ENCODE measurements at regions of chr22 and their contacts with region 1.

Region 1: GRCh38 chr22:23178512-23179254 is 1.6 kb upstream of the BCR start:
- DNase-seq: peak; percentile 90

Region 2: GRCh38 chr22:23219822-23220484 is 41.3 kb after region 1 on chr22:
- intact Hi-C with region 1: loop called in 1 of 2 experiments (anchors 5 kb)
- DNase-seq: no peak

Region 3: DNA sequence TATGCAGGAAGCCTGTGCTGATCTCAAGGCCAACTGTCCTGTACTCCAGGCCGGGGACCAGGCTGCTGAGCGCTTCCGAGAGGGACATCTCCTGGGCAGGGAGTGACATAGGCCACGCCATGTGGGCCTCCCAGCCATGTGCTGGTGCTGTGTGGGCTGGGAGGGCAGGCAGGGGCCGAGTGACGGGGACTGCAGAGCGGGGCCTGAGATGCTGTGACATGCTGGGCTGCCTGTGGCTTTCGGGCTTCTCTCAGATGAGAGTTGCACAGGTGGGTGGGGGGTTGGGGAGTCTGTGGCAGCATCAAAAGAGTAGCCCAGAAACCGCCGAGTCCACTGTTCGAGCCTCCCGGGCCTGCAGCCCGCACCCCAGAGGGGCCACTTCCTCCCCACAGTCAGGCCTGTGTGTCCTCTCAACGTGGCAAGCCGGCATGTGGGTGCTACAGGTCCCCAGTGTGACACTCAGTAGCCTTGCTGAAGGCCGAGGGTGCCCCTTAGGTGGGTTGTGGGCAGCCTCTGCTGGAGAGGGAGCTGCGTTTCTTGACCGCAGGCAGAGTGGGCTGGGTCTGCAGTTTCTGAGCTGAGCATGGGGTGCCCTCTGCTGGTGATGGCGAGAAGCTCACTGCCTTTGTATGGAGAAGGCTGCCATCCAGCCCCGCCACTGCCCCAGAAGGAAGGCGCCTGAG is 102.9 kb after region 1 on chr22:
- intact Hi-C with region 1: loop called (anchors 2 kb)
- DNase-seq: peak; percentile 95

Region 4: DNA sequence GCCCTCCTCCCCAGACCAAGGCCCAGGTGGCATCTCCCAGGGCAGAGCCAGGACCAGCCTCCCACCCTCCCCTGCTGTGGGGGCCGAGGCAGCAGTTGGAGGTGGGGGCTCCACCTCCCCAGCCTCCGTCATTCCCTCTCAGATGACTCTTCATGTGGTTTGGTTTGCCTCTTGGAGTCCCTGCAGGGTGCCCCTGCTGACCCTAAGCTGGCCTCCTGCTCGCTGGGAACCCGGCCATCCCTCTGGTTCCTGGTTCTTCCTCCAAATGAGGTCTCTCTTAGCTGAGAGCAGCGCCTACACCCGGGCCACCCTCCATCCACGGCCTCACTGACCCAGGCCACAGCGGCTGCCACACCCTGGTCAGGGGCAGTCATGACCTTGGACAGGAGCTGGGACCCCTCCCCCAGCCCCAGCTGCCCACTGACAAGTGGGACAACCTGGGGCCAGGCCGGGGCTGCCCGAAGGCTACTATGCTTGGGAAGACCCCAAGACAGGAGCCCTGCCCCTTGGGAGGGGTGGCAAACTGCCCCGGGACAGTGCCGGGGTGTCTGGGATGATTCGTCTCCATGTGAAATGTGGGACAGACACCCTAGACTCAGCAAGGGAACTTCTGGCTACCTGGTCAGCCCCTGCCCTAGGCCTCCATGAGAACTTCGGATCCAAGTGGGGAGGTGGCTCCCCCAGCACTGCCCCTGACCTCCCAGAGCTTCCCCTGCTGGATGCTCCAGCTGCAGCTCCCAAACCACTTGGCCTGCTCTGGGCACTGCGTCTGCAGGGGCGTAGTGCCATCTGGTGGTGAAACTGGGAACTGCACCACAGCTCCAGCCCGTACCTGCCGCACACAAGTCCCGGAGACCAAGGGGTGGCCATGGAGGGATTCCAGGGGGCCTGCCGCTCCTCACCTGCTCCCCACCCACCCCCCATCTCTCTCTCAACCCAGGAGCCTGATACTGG is 206.9 kb after region 1 on chr22:
- intact Hi-C with region 1: loop called (anchors 10 kb)
- DNase-seq: peak; percentile 93

Region 5: GRCh38 chr22:23626286-23626975 is 447.7 kb after region 1 on chr22:
- intact Hi-C with region 1: loop called in 1 of 2 experiments (anchors 5 kb)
- DNase-seq: peak; percentile 19